ENCODE measurements at regions of chr20 and their contacts with region 1.

Region 1: DNA sequence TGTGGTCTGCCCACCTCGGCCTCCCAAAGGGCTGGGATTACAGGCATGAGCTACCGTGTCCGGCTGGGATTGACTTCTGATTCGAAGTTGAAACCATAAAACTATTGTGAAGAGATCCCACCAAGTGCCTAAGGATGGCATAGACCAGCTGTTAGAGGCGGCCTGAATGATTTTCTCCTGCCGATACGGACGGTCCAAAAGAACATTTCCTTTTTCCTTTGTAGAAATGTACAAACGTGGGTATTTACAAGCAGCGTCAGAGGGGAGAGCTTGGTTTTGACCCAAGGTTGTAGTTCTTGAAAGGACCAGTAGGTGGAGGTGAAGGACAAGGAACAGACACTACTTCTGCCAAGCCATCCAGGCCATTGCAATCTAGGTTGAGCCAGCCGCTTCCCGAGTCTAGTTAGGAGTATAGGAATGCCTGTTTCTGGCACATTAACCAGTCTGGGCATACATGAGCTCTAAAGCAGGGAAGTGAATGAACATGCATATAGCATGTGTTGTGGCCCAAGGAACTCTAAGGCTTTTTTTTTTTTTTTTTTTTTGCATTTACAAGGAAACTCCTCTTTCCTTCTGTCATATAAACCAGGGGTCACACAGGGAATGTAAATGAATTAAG is 29.1 kb downstream of the MOCS3 start:
- DNase-seq: peak; percentile 81
- H3K4me3 ChIP-seq: no peak overlapping the region
- H3K27ac ChIP-seq: no peak overlapping the region
- H3K27me3 ChIP-seq: no peaks in the 10 kb centered on the region
- CTCF ChIP-seq: peak; percentile 92

Region 2: GRCh38 chr20:50292324-50293243 is 695.1 kb before region 1 on chr20:
- CTCF ChIA-PET with region 1: interaction called, 12 read pairs
- POLR2A ChIA-PET with region 1: no interaction called
- DNase-seq: peak; percentile 93
- H3K4me3 ChIP-seq: no peak overlapping the region
- H3K27ac ChIP-seq: peak overlapping the region; percentile 95
- H3K27me3 ChIP-seq: no peaks in the 10 kb centered on the region
- CTCF ChIP-seq: no peak

Region 3: DNA sequence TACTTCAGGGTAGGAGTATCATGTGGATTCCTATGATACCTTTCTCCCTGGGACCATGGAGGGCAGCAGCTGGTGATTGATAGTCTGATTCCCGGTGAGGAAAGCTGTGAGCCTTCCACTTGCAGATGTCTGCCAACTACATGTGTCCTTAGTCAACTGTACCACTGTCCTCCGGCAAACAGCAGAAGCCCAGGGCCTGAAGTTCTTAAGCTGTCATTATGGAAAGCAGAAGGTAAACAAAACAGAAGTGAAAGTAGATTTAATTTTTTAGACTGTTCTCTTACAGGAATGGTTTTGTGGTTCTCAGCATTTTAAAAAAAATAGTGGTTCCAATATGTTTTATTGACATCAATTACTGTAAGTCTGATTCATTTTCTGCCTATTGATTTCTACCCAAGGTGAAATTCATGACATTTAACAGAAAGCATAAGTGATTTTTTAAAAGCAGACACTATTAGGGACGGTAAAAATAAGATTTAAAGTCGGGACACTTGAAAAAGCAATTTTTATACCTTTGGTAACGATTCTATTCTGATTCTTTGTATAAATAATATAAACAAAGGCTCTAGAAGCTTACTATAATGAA is 440.9 kb before region 1 on chr20:
- CTCF ChIA-PET with region 1: no interaction called
- POLR2A ChIA-PET with region 1: no interaction called
- DNase-seq: no peak
- H3K4me3 ChIP-seq: no peak overlapping the region
- H3K27ac ChIP-seq: no peak overlapping the region
- H3K27me3 ChIP-seq: no peaks in the 10 kb centered on the region
- CTCF ChIP-seq: no peak

Region 4: GRCh38 chr20:51014797-51015722 is 27.4 kb after region 1 on chr20:
- CTCF ChIA-PET with region 1: interaction called, 20 read pairs
- POLR2A ChIA-PET with region 1: no interaction called
- DNase-seq: no peak
- H3K4me3 ChIP-seq: no peak overlapping the region
- H3K27ac ChIP-seq: no peak overlapping the region
- H3K27me3 ChIP-seq: no peaks in the 10 kb centered on the region
- CTCF ChIP-seq: peak; percentile 88

Region 5: DNA sequence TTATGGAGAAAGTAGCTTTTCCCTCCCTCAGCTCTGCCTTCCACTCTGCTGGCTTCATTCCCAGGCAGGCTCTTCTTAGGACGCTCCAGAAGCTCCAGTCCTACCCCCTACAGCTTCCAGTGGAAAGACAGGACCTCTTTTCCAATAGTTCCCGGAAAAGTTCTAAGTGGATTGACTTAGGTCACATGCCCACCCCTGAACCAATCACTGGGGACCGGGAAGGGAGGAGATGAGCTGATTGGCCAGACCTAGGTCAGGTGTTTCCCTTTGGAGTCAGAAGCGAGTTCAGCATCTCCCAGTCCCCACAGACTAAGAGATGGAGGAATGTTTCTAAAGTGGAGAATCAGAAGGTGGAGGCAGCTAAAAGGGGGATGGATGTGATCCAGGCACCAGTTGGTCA is 98.1 kb after region 1 on chr20:
- CTCF ChIA-PET with region 1: no interaction called
- POLR2A ChIA-PET with region 1: no interaction called
- DNase-seq: no peak
- H3K4me3 ChIP-seq: no peak overlapping the region
- H3K27ac ChIP-seq: no peak overlapping the region
- H3K27me3 ChIP-seq: peaks cover 62% of the 10 kb centered on the region
- CTCF ChIP-seq: no peak

Region 6: GRCh38 chr20:51095633-51096513 is 108.2 kb after region 1 on chr20:
- CTCF ChIA-PET with region 1: no interaction called
- POLR2A ChIA-PET with region 1: no interaction called
- DNase-seq: no peak
- H3K4me3 ChIP-seq: no peak overlapping the region
- H3K27ac ChIP-seq: no peak overlapping the region
- H3K27me3 ChIP-seq: peaks cover 53% of the 10 kb centered on the region
- CTCF ChIP-seq: no peak

Region 7: DNA sequence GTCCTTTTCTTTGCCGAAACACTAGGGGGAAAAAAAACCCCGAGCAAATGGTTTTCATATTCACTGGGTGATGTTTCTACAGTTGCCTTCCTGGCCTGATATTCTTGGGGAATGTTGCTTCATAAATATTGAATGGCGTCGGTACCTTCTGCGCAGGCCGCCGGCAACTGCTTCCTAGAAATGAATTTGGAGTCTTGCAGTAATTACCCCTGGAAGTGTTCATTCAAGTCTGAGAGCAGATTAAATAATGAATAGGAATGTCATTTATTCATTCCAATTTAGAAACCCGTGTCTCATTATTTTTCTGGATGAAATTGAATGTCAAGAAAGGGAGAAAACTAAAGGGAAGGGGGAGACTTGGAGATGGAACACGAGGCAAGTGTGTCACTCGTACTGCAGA is 214.6 kb after region 1 on chr20:
- CTCF ChIA-PET with region 1: no interaction called
- POLR2A ChIA-PET with region 1: no interaction called
- DNase-seq: no peak
- H3K4me3 ChIP-seq: no peak overlapping the region
- H3K27ac ChIP-seq: no peak overlapping the region
- H3K27me3 ChIP-seq: peaks cover 4% of the 10 kb centered on the region
- CTCF ChIP-seq: no peak

Region 8: GRCh38 chr20:51326201-51326819 is 338.6 kb after region 1 on chr20:
- CTCF ChIA-PET with region 1: interaction called, 34 read pairs
- POLR2A ChIA-PET with region 1: no interaction called
- DNase-seq: no peak
- H3K4me3 ChIP-seq: no peak overlapping the region
- H3K27ac ChIP-seq: peak overlapping the region; percentile 93
- H3K27me3 ChIP-seq: no peaks in the 10 kb centered on the region
- CTCF ChIP-seq: peak; percentile 44

Region 9: GRCh38 chr20:51354769-51355319 is 367.1 kb after region 1 on chr20:
- CTCF ChIA-PET with region 1: interaction called, 23 read pairs
- POLR2A ChIA-PET with region 1: no interaction called
- DNase-seq: no peak
- H3K4me3 ChIP-seq: no peak overlapping the region
- H3K27ac ChIP-seq: peak overlapping the region; percentile 84
- H3K27me3 ChIP-seq: no peaks in the 10 kb centered on the region
- CTCF ChIP-seq: no peak

Region 10: DNA sequence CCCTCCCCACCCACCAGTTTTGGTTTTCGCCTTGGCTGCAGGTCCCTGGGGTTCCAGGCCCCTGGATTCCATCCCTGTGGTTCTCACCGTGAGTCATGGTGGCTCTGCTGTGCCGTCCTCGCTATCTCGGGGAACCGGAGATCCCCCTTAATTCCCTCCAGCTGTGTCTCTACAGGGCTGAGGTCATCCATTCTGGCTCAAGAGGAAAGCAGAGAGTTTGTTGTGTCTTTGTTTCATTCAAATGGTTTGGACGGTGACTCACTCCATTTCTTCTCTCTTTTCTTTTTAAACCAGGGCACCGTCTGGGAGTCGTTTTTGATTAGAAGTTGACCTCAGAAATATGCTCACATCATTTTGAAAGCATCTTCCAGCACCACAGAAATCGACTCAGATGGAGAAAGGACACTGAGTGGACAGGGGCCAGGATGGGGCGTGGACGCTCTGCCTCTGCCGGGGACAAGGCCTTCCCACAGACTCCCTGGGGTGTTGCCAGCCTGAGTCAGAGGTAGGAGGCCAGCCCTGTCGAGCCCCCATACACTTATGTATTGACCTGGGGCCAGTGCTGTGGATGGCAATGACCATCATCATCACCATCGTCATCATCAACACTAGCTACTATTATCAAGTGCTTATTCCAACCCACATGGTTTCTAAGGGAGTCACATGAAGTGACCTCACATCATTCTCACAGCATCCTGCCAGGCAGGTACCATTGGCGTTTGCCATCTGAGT is 378.6 kb after region 1 on chr20:
- CTCF ChIA-PET with region 1: interaction called, 23 read pairs
- POLR2A ChIA-PET with region 1: no interaction called
- DNase-seq: peak; percentile 99
- H3K4me3 ChIP-seq: no peak overlapping the region
- H3K27ac ChIP-seq: peak overlapping the region; percentile 100
- H3K27me3 ChIP-seq: no peaks in the 10 kb centered on the region
- CTCF ChIP-seq: no peak

Region 11: DNA sequence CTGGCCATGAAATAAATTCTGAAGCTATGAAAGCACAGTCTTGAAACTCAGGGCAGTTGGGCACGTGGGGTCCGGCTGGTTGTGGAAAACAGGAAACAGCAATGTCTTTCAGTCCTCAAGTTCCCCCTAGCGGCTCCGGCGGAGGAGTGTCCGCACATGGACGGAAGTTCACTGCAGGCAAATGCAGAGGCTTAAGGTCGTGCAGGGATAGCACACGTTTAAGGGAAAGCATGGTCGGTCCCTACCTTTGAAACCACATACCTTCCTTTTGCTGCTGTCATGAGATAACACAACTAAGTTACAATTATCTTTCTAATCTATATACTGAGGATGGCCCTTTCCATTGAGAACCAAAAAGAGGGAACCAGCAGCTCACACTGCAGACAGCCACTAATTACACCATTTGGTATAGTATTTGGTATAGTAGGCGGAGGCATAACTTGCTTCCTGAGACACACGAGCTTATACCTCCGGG is 607.4 kb after region 1 on chr20:
- CTCF ChIA-PET with region 1: interaction called, 53 read pairs
- POLR2A ChIA-PET with region 1: no interaction called
- DNase-seq: peak; percentile 77
- H3K4me3 ChIP-seq: no peak overlapping the region
- H3K27ac ChIP-seq: no peak overlapping the region
- H3K27me3 ChIP-seq: no peaks in the 10 kb centered on the region
- CTCF ChIP-seq: peak; percentile 94

Measured in AG04450 (cell line).